Vagina (tissue), 2 donors: ENCODE measurements at regions of chr11 and their contacts with region 1.

Region 1: GRCh38 chr11:11787305-11788062 is 54.3 kb upstream of the USP47 start:
- DNase-seq: no peak
- H3K4me3 ChIP-seq: no peak overlapping the region
- H3K27ac ChIP-seq: no peak overlapping the region
- H3K4me1 ChIP-seq: no peaks in the 10 kb centered on the region
- H3K27me3 ChIP-seq: no peaks in the 10 kb centered on the region
- CTCF ChIP-seq: peak; percentile 83 to 93 (median 91)
- POLR2A ChIP-seq: no peak

Region 2: DNA sequence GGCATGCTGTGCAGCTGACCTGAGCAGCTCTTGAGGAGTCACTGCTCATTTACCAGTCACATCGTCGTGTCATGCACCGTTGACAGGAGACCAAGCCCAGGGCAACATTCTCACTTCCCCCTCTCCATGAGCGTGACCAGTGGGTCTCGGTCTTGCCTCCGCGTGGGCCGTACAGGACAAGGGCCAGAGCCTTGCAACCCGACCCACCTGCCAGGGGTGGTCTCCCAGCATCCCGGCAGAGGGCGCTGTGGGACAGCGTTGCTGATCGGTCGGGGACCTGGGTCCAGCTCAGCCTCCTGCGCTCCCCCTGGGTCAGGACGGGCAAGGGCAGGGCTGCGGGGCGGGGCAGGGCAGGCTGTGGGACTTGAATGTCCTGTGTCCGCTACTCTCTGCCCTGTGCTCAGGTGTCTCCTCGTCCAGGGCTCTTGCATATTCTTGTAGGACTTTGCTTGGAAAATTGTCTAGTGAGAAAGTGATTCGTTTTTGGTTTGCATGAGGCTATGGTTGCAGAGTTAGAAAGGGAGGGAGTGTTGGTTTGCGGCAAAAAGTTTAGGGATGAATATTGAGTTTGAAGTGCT is 995.0 kb before region 1 on chr11:
- intact Hi-C with region 1: loop called (anchors 10 kb)
- DNase-seq: no peak
- H3K4me3 ChIP-seq: no peak overlapping the region
- H3K27ac ChIP-seq: no peak overlapping the region
- H3K4me1 ChIP-seq: peaks cover 10% of the 10 kb centered on the region
- H3K27me3 ChIP-seq: no peaks in the 10 kb centered on the region
- CTCF ChIP-seq: peak; percentile 74 to 89 (median 89)
- POLR2A ChIP-seq: no peak

Region 3: GRCh38 chr11:11028017-11028692 is 759.3 kb before region 1 on chr11:
- intact Hi-C with region 1: loop called (anchors 5 kb)
- DNase-seq: no peak
- H3K4me3 ChIP-seq: no peak overlapping the region
- H3K27ac ChIP-seq: no peak overlapping the region
- H3K4me1 ChIP-seq: no peaks in the 10 kb centered on the region
- H3K27me3 ChIP-seq: no peaks in the 10 kb centered on the region
- CTCF ChIP-seq: peak; percentile 59 to 78 (median 72)
- POLR2A ChIP-seq: no peak

Region 4: GRCh38 chr11:11567936-11568650 is 219.4 kb before region 1 on chr11:
- intact Hi-C with region 1: no loop called
- DNase-seq: no peak
- H3K4me3 ChIP-seq: no peak overlapping the region
- H3K27ac ChIP-seq: peak overlapping the region; percentile 49
- H3K4me1 ChIP-seq: peaks cover 37% of the 10 kb centered on the region
- H3K27me3 ChIP-seq: no peaks in the 10 kb centered on the region
- CTCF ChIP-seq: no peak
- POLR2A ChIP-seq: no peak

Region 5: DNA sequence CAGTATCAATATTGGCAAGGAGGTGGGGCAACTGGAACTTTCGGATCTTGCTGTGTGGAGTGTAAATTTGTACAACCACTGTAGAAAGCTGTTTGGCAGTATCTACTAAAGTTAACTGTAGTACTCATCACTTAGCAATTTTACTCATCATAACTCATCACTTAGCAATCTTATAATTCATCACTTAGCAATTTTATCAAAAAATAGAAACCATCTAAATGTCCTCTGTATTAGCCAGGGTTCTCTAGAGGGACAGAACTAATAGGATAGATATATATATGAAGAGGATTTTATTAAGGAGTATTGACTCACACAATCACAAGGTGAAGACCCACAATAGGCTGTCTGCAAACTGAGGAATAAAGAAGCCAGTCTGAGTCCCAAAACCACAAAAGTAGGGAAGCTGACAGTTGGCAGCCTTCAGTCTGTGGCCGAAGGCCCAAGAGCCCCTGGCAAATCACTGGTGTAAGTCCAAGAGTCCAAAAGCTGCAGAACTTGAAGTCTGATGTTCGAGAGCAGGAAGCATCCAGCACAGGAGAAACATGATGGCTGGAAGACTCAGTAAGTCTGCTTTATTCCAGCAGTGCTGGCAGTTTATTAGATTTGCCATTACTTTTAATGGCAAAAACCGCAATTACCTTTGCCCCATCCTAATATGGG is 38.6 kb before region 1 on chr11:
- intact Hi-C with region 1: no loop called
- DNase-seq: peak in 1 of 2 donors; percentile 49
- H3K4me3 ChIP-seq: no peak overlapping the region
- H3K27ac ChIP-seq: no peak overlapping the region
- H3K4me1 ChIP-seq: no peaks in the 10 kb centered on the region
- H3K27me3 ChIP-seq: no peaks in the 10 kb centered on the region
- CTCF ChIP-seq: no peak
- POLR2A ChIP-seq: no peak

Region 6: GRCh38 chr11:11946180-11946579 is 158.7 kb after region 1 on chr11:
- intact Hi-C with region 1: no loop called
- DNase-seq: no peak
- H3K4me3 ChIP-seq: no peak overlapping the region
- H3K27ac ChIP-seq: no peak overlapping the region
- H3K4me1 ChIP-seq: no peaks in the 10 kb centered on the region
- H3K27me3 ChIP-seq: no peaks in the 10 kb centered on the region
- CTCF ChIP-seq: no peak
- POLR2A ChIP-seq: no peak

Region 7: GRCh38 chr11:13052130-13052605 is 1264.7 kb after region 1 on chr11:
- intact Hi-C with region 1: loop called (anchors 10 kb)
- DNase-seq: no peak
- H3K4me3 ChIP-seq: no peak overlapping the region
- H3K27ac ChIP-seq: no peak overlapping the region
- H3K4me1 ChIP-seq: peaks cover 8% of the 10 kb centered on the region
- H3K27me3 ChIP-seq: no peaks in the 10 kb centered on the region
- CTCF ChIP-seq: no peak
- POLR2A ChIP-seq: no peak